A673 (cell line): ENCODE measurements at regions of chr16 and their contacts with region 1.

Region 1: GRCh38 chr16:55842369-55843104 is 9.6 kb upstream of the CES1 start:
- DNase-seq: peak; percentile 77
- H3K4me3 ChIP-seq: no peak overlapping the region
- H3K27ac ChIP-seq: no peak overlapping the region
- H3K4me1 ChIP-seq: peaks cover 4% of the 10 kb centered on the region
- H3K27me3 ChIP-seq: no peaks in the 10 kb centered on the region
- CTCF ChIP-seq: peak; percentile 79

Region 2: GRCh38 chr16:55136356-55137150 is 706.0 kb before region 1 on chr16:
- CTCF ChIA-PET with region 1: no interaction called
- POLR2A ChIA-PET with region 1: no interaction called
- intact Hi-C with region 1: no loop called
- DNase-seq: no peak
- H3K4me3 ChIP-seq: no peak overlapping the region
- H3K27ac ChIP-seq: no peak overlapping the region
- H3K4me1 ChIP-seq: no peaks in the 10 kb centered on the region
- H3K27me3 ChIP-seq: no peaks in the 10 kb centered on the region
- CTCF ChIP-seq: no peak

Region 3: GRCh38 chr16:55567382-55567781 is 275.2 kb before region 1 on chr16:
- CTCF ChIA-PET with region 1: no interaction called
- POLR2A ChIA-PET with region 1: no interaction called
- intact Hi-C with region 1: loop called (anchors 10 kb)
- DNase-seq: no peak
- H3K4me3 ChIP-seq: no peak overlapping the region
- H3K27ac ChIP-seq: no peak overlapping the region
- H3K4me1 ChIP-seq: no peaks in the 10 kb centered on the region
- H3K27me3 ChIP-seq: no peaks in the 10 kb centered on the region
- CTCF ChIP-seq: no peak

Region 4: GRCh38 chr16:55711959-55712876 is 130.3 kb before region 1 on chr16:
- CTCF ChIA-PET with region 1: interaction called, 3 read pairs
- POLR2A ChIA-PET with region 1: no interaction called
- intact Hi-C with region 1: loop called (anchors 1 kb)
- DNase-seq: peak; percentile 74
- H3K4me3 ChIP-seq: no peak overlapping the region
- H3K27ac ChIP-seq: no peak overlapping the region
- H3K4me1 ChIP-seq: no peaks in the 10 kb centered on the region
- H3K27me3 ChIP-seq: no peaks in the 10 kb centered on the region
- CTCF ChIP-seq: peak; percentile 80

Region 5: GRCh38 chr16:55888546-55888945 is 46.0 kb after region 1 on chr16:
- CTCF ChIA-PET with region 1: no interaction called
- POLR2A ChIA-PET with region 1: no interaction called
- intact Hi-C with region 1: no loop called
- DNase-seq: no peak
- H3K4me3 ChIP-seq: no peak overlapping the region
- H3K27ac ChIP-seq: no peak overlapping the region
- H3K4me1 ChIP-seq: no peaks in the 10 kb centered on the region
- H3K27me3 ChIP-seq: no peaks in the 10 kb centered on the region
- CTCF ChIP-seq: no peak

Region 6: DNA sequence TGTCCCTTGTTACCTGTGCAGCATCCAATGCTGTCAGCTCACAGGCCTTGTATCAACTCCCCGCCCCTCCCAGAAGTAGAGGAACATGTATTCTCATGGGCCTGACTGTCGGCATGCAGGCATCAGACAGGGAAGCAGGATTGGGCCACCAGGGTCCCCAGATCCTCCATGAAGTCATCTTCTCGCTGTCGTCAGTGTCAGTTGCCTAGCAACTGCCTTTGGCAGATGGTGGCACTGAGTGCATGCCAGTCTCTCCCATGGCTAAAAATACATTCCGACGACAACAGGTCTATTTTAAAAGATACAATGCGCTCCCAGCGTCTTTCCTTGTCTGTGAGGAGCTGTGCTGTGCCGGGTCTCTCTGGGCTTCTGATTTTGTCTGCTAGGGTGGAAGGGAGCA is 69.5 kb after region 1 on chr16:
- CTCF ChIA-PET with region 1: no interaction called
- POLR2A ChIA-PET with region 1: no interaction called
- intact Hi-C with region 1: no loop called
- DNase-seq: no peak
- H3K4me3 ChIP-seq: no peak overlapping the region
- H3K27ac ChIP-seq: no peak overlapping the region
- H3K4me1 ChIP-seq: no peaks in the 10 kb centered on the region
- H3K27me3 ChIP-seq: peaks cover 12% of the 10 kb centered on the region
- CTCF ChIP-seq: no peak